IMR-90 (cell line): ENCODE measurements at regions of chr20 and their contacts with region 1.

Region 1: GRCh38 chr20:35741892-35742740 is at the start of gene RBM39:
- DNase-seq: peak; percentile 100
- ATAC-seq: peak; percentile 93
- H3K4me3 ChIP-seq: peak within 1 kb of the TSS; percentile 74
- H3K27ac ChIP-seq: peak within 1 kb of the TSS; percentile 96
- H3K4me1 ChIP-seq: peaks cover 7% of the 10 kb centered on the region
- H3K27me3 ChIP-seq: no peaks in the 10 kb centered on the region
- CTCF ChIP-seq: peak; percentile 49
- POLR2A ChIP-seq: peak; percentile 98
- RAD21 ChIP-seq: no peak
- total RNA-seq, gene RBM39: 166 and 280 TPM in 2 replicates

Region 2: GRCh38 chr20:35342154-35342769 is 399.9 kb before region 1 on chr20:
- CTCF ChIA-PET with region 1: no interaction called
- POLR2A ChIA-PET with region 1: no interaction called
- dilution Hi-C with region 1: no loop called
- in situ Hi-C with region 1: no loop called
- intact Hi-C with region 1: no loop called
- DNase-seq: no peak
- ATAC-seq: no peak
- H3K4me3 ChIP-seq: no peak overlapping the region
- H3K27ac ChIP-seq: no peak overlapping the region
- H3K4me1 ChIP-seq: peaks cover 30% of the 10 kb centered on the region
- H3K27me3 ChIP-seq: no peaks in the 10 kb centered on the region
- CTCF ChIP-seq: peak; percentile 30; the same call in 1 of the 2 replicates
- POLR2A ChIP-seq: no peak
- RAD21 ChIP-seq: peak; percentile 42

Region 3: GRCh38 chr20:35447082-35447789 is 294.9 kb before region 1 on chr20:
- CTCF ChIA-PET with region 1: no interaction called
- POLR2A ChIA-PET with region 1: no interaction called
- dilution Hi-C with region 1: no loop called
- in situ Hi-C with region 1: no loop called
- intact Hi-C with region 1: no loop called
- DNase-seq: peak; percentile 73
- ATAC-seq: peak; percentile 96
- H3K4me3 ChIP-seq: peak overlapping the region; percentile 32; the same call in 1 of the 2 replicates
- H3K27ac ChIP-seq: no peak overlapping the region
- H3K4me1 ChIP-seq: peaks cover 2% of the 10 kb centered on the region
- H3K27me3 ChIP-seq: no peaks in the 10 kb centered on the region
- CTCF ChIP-seq: peak; percentile 85
- POLR2A ChIP-seq: no peak
- RAD21 ChIP-seq: peak; percentile 82

Region 4: GRCh38 chr20:35664544-35665221 is 77.4 kb before region 1 on chr20 and contains the starts of genes CPNE1 and RBM12:
- CTCF ChIA-PET with region 1: no interaction called
- POLR2A ChIA-PET with region 1: interaction called, 3 read pairs
- dilution Hi-C with region 1: no loop called
- in situ Hi-C with region 1: no loop called
- intact Hi-C with region 1: loop called (anchors 2 kb)
- DNase-seq: peak; percentile 91
- ATAC-seq: peak; percentile 90
- H3K4me3 ChIP-seq: peak within 1 kb of the TSS; percentile 86
- H3K27ac ChIP-seq: peak within 1 kb of the TSS; percentile 94
- H3K4me1 ChIP-seq: peaks cover 2% of the 10 kb centered on the region
- H3K27me3 ChIP-seq: no peaks in the 10 kb centered on the region
- CTCF ChIP-seq: no peak
- POLR2A ChIP-seq: peak; percentile 97
- RAD21 ChIP-seq: no peak; the same call in 1 of the 2 replicates
- total RNA-seq, gene CPNE1: 141 and 163 TPM in 2 replicates
- total RNA-seq, gene RBM12: 65.8 and 69.4 TPM in 2 replicates

Region 5: GRCh38 chr20:35791821-35792220 is 49.7 kb after region 1 on chr20:
- CTCF ChIA-PET with region 1: no interaction called
- POLR2A ChIA-PET with region 1: interaction called, 3 read pairs
- dilution Hi-C with region 1: no loop called
- in situ Hi-C with region 1: no loop called
- intact Hi-C with region 1: loop called (anchors 2 kb)
- DNase-seq: peak; percentile 93
- ATAC-seq: peak; percentile 96
- H3K4me3 ChIP-seq: no peak overlapping the region
- H3K27ac ChIP-seq: peak overlapping the region; percentile 86
- H3K4me1 ChIP-seq: peaks cover 13% of the 10 kb centered on the region
- H3K27me3 ChIP-seq: no peaks in the 10 kb centered on the region
- CTCF ChIP-seq: no peak
- POLR2A ChIP-seq: no peak
- RAD21 ChIP-seq: no peak

Region 6: DNA sequence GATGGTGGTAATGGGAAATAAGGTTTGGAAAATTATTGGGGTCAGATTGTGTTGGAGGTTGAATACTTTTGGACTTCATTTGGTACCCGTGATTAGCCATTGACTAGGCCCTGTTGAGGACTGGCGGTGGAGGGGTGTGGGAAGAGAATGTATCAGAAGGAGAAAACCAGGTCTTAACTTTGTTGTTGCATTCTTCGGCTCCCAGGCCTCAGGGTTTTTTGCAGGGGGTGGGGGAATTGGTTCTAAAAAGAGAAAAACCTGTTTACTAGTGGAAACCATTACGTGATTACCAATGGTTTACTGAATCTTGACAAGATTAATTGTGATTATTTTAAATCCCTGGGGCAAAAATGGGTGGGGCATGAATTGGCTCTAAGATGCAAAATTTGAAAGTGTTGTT is 114.8 kb after region 1 on chr20:
- CTCF ChIA-PET with region 1: no interaction called
- POLR2A ChIA-PET with region 1: interaction called, 13 read pairs
- dilution Hi-C with region 1: no loop called
- in situ Hi-C with region 1: no loop called
- intact Hi-C with region 1: no loop called
- DNase-seq: no peak
- ATAC-seq: no peak
- H3K4me3 ChIP-seq: no peak overlapping the region
- H3K27ac ChIP-seq: no peak overlapping the region
- H3K4me1 ChIP-seq: peaks cover 5% of the 10 kb centered on the region
- H3K27me3 ChIP-seq: no peaks in the 10 kb centered on the region
- CTCF ChIP-seq: no peak
- POLR2A ChIP-seq: no peak
- RAD21 ChIP-seq: no peak

Region 7: DNA sequence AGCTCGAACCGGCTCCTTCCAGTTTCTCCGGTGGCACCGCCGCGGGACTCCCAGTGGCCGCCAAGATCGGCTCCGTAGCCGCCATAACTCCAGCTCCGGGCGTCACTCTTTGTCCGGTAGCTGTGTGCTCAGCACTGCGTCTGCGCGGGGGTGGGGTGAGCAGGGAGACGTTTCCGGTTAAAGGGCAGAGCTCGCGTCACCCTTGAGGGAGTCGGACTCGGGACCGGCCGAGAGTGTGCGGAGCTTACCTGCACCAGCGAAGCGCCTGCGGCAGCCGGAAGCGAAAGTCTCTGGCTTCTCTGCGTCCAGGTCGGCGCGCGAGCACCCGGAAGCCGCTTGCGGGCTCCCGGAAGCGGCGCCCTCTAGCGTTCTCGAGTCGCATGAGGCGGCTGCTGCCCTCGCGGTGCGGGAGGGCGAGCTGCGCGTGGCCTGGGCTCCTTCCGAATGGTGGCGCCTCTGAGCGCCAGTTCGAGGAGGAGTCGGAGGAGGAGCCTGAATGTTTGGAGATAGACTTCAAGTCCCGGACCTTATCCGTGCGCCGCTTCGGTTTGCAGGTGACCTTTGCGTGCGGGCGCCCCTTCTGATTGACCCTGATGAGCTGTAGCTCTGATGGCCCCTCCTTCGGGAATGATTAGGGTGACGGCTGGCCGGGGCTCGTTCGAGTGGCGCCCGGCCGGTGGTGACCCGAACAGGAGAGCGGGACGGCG is 212.2 kb after region 1 on chr20 and contains the start of gene SCAND1:
- CTCF ChIA-PET with region 1: no interaction called
- POLR2A ChIA-PET with region 1: interaction called, 8 read pairs
- dilution Hi-C with region 1: no loop called
- in situ Hi-C with region 1: no loop called
- intact Hi-C with region 1: loop called (anchors 5 kb)
- DNase-seq: peak; percentile 95
- ATAC-seq: peak; percentile 94
- H3K4me3 ChIP-seq: peak within 1 kb of the TSS; percentile 69
- H3K27ac ChIP-seq: peak within 1 kb of the TSS; percentile 85
- H3K4me1 ChIP-seq: peaks cover 3% of the 10 kb centered on the region; the same call in 1 of the 2 replicates
- H3K27me3 ChIP-seq: no peaks in the 10 kb centered on the region
- CTCF ChIP-seq: peak; percentile 99
- POLR2A ChIP-seq: peak; percentile 92
- RAD21 ChIP-seq: peak; percentile 53
- total RNA-seq, gene SCAND1: 7.5 and 11.7 TPM in 2 replicates